Gastrocnemius medialis (tissue), 4 donors: ENCODE measurements at regions of chr4 and their contacts with region 1.

Region 1: GRCh38 chr4:158209825-158210807 is at the start of gene TMEM144:
- DNase-seq: peak; percentile 73 to 88
- ATAC-seq: peak; percentile 96
- H3K4me3 ChIP-seq: peak within 1 kb of the TSS; percentile 54 to 71 (median 62)
- H3K27ac ChIP-seq: peak within 1 kb of the TSS; percentile 81 to 91 (median 84)
- H3K4me1 ChIP-seq: peaks cover 9 to 12% of the 10 kb centered on the region in 2 donors
- H3K27me3 ChIP-seq: no peaks in the 10 kb centered on the region
- CTCF ChIP-seq: peak in 1 of 5 experiments; percentile 6
- POLR2A ChIP-seq: peak; percentile 34 to 55
- total RNA-seq, gene TMEM144: 0.51 to 2.9 (median 2.3) TPM

Region 2: DNA sequence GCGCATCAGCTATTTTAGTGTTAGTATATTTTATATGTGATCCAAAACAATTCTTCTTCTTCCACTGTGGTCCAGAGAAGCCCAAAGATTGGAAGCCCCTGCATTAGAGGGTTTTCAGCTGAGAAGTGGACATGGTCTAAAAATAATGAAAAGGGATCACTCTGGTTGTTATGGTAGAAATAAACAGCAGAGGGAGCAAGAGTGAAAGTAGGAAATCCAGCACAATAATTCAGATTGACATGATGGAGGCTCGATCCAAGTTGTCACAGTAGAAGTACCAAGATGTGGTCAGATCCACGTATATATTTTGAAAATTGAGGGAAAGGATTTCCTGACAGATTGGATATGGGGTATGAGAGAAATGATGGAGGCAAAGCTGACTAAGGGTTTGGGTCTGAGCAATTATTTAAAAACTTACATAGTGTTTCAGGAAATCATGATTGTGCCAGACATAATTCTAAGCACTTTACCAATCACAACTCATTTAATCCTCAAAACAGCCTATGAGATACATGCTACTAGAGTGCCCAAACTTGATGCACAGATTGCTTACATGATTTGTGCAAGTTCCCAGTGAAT is 16.9 kb before region 1 on chr4:
- in situ Hi-C with region 1: no loop called
- intact Hi-C with region 1: loop called (anchors 2 kb)
- DNase-seq: no peak
- ATAC-seq: peak; percentile 50 to 80
- H3K4me3 ChIP-seq: no peak overlapping the region
- H3K27ac ChIP-seq: no peak overlapping the region
- H3K4me1 ChIP-seq: no peaks in the 10 kb centered on the region
- H3K27me3 ChIP-seq: no peaks in the 10 kb centered on the region
- CTCF ChIP-seq: peak; percentile 20 to 52 (median 40)
- POLR2A ChIP-seq: no peak

Region 3: GRCh38 chr4:158268553-158268952 is 58.4 kb after region 1 on chr4:
- in situ Hi-C with region 1: no loop called
- intact Hi-C with region 1: no loop called
- DNase-seq: no peak
- ATAC-seq: no peak
- H3K4me3 ChIP-seq: no peak overlapping the region
- H3K27ac ChIP-seq: no peak overlapping the region
- H3K4me1 ChIP-seq: no peaks in the 10 kb centered on the region
- H3K27me3 ChIP-seq: no peaks in the 10 kb centered on the region
- CTCF ChIP-seq: no peak
- POLR2A ChIP-seq: no peak

Region 4: GRCh38 chr4:158636619-158637018 is 426.5 kb after region 1 on chr4:
- in situ Hi-C with region 1: no loop called
- intact Hi-C with region 1: no loop called
- DNase-seq: no peak
- ATAC-seq: no peak
- H3K4me3 ChIP-seq: no peak overlapping the region
- H3K27ac ChIP-seq: no peak overlapping the region
- H3K4me1 ChIP-seq: no peaks in the 10 kb centered on the region
- H3K27me3 ChIP-seq: no peaks in the 10 kb centered on the region
- CTCF ChIP-seq: no peak
- POLR2A ChIP-seq: no peak